Astrocyte of the cerebellum (primary cell): ENCODE measurements at regions of chr12 and their contacts with region 1.

Region 1: GRCh38 chr12:76031537-76032073 is at the start of gene PHLDA1:
- DNase-seq: peak; percentile 94
- H3K4me3 ChIP-seq: peak within 1 kb of the TSS; percentile 98
- CTCF ChIP-seq: peak; percentile 48

Region 2: DNA sequence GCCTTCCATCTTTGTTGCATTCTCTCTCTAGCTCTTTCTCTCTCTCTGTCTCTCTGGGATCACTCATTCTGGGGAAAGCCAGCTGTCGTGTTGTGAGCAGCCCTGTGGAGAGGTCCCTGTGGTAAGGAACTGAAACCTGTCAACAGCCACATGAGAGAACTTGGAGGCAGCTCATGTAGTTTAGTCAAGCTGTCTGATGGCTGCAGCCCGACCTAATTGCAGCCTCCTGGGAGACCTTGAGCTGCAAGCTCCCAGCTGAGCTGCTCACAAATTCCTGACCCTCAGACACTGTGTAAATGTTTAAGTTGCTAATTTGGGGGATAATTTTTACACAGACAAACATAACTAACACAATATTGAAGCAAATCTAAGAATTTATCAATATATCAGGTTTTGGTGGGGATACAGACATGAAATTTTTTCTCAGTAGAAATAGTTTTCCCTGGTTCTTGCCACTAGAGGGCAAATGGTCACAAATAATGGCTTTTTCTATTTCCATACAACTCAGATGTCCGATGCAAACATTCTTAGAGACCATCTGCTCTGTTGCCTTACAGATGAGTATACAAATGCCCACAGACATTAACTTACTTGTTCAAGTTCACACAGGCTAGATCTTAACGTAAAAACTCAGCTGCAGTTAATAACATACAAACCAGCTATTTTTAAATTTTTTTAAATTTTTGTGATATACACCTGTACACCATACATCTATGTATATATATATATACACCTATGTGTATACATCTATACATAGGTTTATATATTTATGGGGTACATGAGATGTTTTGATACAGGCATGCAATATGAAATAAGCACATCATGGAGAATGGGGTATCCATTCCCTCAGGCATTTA is 504.7 kb before region 1 on chr12:
- in situ Hi-C with region 1: loop called (anchors 25 kb)
- DNase-seq: peak; percentile 52
- H3K4me3 ChIP-seq: no peak overlapping the region
- CTCF ChIP-seq: peak; percentile 55

Region 3: GRCh38 chr12:76080729-76081415 is 49.3 kb after region 1 on chr12:
- in situ Hi-C with region 1: no loop called
- DNase-seq: no peak
- H3K4me3 ChIP-seq: no peak overlapping the region
- CTCF ChIP-seq: no peak